OCI-LY7 (cell line): ENCODE measurements at regions of chr19 and their contacts with region 1.

Region 1: GRCh38 chr19:58346961-58347931 is 6.0 kb downstream of the A1BG start:
- DNase-seq: peak; percentile 89
- H3K4me3 ChIP-seq: peak overlapping the region; percentile 79
- H3K27ac ChIP-seq: peak overlapping the region; percentile 44
- H3K4me1 ChIP-seq: peaks cover 18% of the 10 kb centered on the region
- CTCF ChIP-seq: no peak

Region 2: GRCh38 chr19:58278157-58279041 is 68.8 kb before region 1 on chr19 and contains the start of gene ZNF8:
- CTCF ChIA-PET with region 1: no interaction called
- POLR2A ChIA-PET with region 1: no interaction called
- intact Hi-C with region 1: loop called (anchors 2 kb)
- DNase-seq: peak; percentile 99
- H3K4me3 ChIP-seq: peak within 1 kb of the TSS; percentile 83
- H3K27ac ChIP-seq: peak within 1 kb of the TSS; percentile 52
- H3K4me1 ChIP-seq: peaks cover 18% of the 10 kb centered on the region
- CTCF ChIP-seq: no peak
- total RNA-seq, gene ZNF8: 7.3 and 7.8 TPM in 2 replicates

Region 3: DNA sequence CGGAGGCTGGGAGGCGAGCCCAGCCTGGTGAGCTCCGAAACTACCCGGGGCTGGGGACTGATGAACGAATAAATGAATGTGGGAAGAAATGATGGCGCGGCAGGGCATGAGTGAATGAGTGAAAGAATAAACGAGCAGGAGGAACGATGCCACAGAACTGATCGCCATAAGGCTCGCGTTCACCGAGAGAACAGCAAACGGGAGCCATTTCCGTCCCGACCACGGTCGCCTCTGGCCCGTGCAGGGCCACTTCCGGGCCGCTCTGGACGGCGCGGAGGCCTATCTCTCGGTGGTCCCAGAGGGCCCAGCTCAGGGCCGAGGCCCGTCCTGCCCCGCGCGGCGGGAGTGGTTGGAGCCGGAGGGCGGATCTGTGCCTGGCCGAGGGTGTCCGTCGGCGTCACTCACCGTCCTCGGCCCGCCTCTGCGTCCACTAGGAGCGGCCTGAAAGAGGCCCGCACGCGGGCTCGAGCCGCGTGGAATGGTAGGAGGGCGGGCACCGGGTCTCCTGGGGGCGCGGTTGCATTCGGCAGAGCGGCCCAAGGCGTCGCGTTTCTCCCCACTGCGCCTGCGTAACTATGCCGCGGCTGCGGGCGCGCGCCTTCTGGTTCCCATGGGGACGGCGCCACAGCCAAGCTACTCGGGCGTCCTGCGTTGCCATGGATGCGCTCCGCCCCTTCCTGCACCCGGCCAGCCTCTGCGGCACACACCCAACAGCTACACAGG is 15.2 kb after region 1 on chr19 and contains the start of gene ZNF497:
- CTCF ChIA-PET with region 1: no interaction called
- POLR2A ChIA-PET with region 1: interaction called, 21 read pairs
- intact Hi-C with region 1: no loop called
- DNase-seq: peak; percentile 97
- H3K4me3 ChIP-seq: peak within 1 kb of the TSS; percentile 75
- H3K27ac ChIP-seq: peak within 1 kb of the TSS; percentile 41
- H3K4me1 ChIP-seq: peaks cover 18% of the 10 kb centered on the region
- CTCF ChIP-seq: no peak
- total RNA-seq, gene ZNF497: 2.8 and 3.6 TPM in 2 replicates

Region 4: GRCh38 chr19:58475714-58476497 is 128.7 kb after region 1 on chr19 and contains the start of gene ZNF446:
- CTCF ChIA-PET with region 1: interaction called, 6 read pairs
- POLR2A ChIA-PET with region 1: no interaction called
- intact Hi-C with region 1: loop called (anchors 5 kb)
- DNase-seq: peak; percentile 97
- H3K4me3 ChIP-seq: peak within 1 kb of the TSS; percentile 75
- H3K27ac ChIP-seq: peak within 1 kb of the TSS; percentile 77
- H3K4me1 ChIP-seq: peaks cover 20% of the 10 kb centered on the region
- CTCF ChIP-seq: peak; percentile 29; the same call in 1 of the 2 replicates
- total RNA-seq, gene ZNF446: 8.0 and 9.9 TPM in 2 replicates